Heart right ventricle (tissue), 16 donors: ENCODE measurements at regions of chr3 and their contacts with region 1.

Region 1: GRCh38 chr3:53160660-53161449 is at the start of gene PRKCD:
- DNase-seq: peak; percentile 79 to 89
- ATAC-seq: peak; percentile 82 to 93 (median 88)
- H3K4me3 ChIP-seq: peak within 1 kb of the TSS; percentile 58 to 94 (median 88)
- H3K27ac ChIP-seq: peak within 1 kb of the TSS; percentile 60 to 95 (median 85)
- H3K4me1 ChIP-seq: peaks cover 5 to 56% (median 35%) of the 10 kb centered on the region in 9 donors
- H3K27me3 ChIP-seq: peaks cover 0 to 12% (median 0%) of the 10 kb centered on the region in 7 donors
- CTCF ChIP-seq: peak; percentile 13 to 64 (median 54)
- total RNA-seq, gene PRKCD: 6.6 to 28.3 (median 7.7) TPM

Region 2: GRCh38 chr3:53122933-53123305 is 37.9 kb before region 1 on chr3:
- intact Hi-C with region 1: loop called in 3 of 10 experiments (anchors 5 kb)
- DNase-seq: no peak
- ATAC-seq: peak in 3 of 8 donors; percentile 19 to 25 (median 24)
- H3K4me3 ChIP-seq: no peak overlapping the region
- H3K27ac ChIP-seq: peak overlapping the region in 9 of 10 donors; percentile 23 to 69 (median 50)
- H3K4me1 ChIP-seq: peaks cover 0 to 38% (median 21%) of the 10 kb centered on the region in 9 donors
- H3K27me3 ChIP-seq: no peaks in the 10 kb centered on the region
- CTCF ChIP-seq: no peak

Region 3: GRCh38 chr3:53130179-53131061 is 30.4 kb before region 1 on chr3 and contains the start of gene RFT1:
- intact Hi-C with region 1: loop called in 4 of 10 experiments (anchors 1 to 5 kb)
- DNase-seq: peak; percentile 98 to 99
- ATAC-seq: peak; percentile 94 to 99 (median 98)
- H3K4me3 ChIP-seq: peak within 1 kb of the TSS; percentile 73 to 96 (median 89)
- H3K27ac ChIP-seq: peak within 1 kb of the TSS; percentile 84 to 98 (median 90)
- H3K4me1 ChIP-seq: peaks cover 6 to 42% (median 23%) of the 10 kb centered on the region in 9 donors
- H3K27me3 ChIP-seq: no peaks in the 10 kb centered on the region
- CTCF ChIP-seq: peak in 4 of 9 donors; percentile 10 to 43 (median 38)
- total RNA-seq, gene RFT1: 5.7 to 13.1 (median 9.5) TPM